Activated B cell treated with CpG ODN at 0.5 μM for 24 hours (primary cell): ENCODE measurements at regions of chr21 and their contacts with region 1.

Region 1: DNA sequence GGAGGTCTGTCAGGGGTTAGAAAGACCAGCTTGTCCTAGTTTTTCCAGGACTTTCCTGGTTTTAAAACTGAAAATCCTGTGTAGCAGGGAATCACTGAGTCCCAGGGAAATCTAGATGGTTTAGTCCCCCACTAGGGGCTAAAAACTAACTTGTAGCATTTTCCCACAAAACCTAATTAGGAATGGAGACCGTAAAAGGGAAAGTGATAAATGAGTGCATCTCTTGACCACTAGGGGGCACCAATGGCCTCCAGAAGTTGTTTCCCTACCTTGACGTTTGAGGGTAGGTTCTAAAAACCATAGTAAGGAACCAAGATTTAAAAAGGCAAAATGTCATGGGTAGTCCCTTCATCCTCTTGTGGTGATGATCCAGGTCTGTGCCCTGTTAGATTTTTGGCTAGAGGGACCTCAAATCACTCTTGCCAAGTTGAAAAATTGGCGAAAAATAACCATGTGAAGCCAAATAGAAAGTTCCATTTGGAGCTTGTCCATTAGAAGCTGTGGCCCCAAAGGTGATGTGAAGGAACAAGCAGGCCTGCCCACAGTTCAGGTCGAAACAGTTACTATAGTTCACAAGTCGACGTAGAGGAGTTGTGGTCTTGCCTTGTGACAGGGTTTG is 24.5 kb downstream of the CLIC6 start:
- DNase-seq: no peak
- ATAC-seq: no peak
- H3K4me3 Mint-ChIP-seq: no peak overlapping the region
- H3K27ac Mint-ChIP-seq: no peak overlapping the region
- H3K4me1 Mint-ChIP-seq: no peaks in the 10 kb centered on the region
- H3K27me3 Mint-ChIP-seq: peaks cover 13% of the 10 kb centered on the region
- CTCF ChIP-seq: peak; percentile 72

Region 2: DNA sequence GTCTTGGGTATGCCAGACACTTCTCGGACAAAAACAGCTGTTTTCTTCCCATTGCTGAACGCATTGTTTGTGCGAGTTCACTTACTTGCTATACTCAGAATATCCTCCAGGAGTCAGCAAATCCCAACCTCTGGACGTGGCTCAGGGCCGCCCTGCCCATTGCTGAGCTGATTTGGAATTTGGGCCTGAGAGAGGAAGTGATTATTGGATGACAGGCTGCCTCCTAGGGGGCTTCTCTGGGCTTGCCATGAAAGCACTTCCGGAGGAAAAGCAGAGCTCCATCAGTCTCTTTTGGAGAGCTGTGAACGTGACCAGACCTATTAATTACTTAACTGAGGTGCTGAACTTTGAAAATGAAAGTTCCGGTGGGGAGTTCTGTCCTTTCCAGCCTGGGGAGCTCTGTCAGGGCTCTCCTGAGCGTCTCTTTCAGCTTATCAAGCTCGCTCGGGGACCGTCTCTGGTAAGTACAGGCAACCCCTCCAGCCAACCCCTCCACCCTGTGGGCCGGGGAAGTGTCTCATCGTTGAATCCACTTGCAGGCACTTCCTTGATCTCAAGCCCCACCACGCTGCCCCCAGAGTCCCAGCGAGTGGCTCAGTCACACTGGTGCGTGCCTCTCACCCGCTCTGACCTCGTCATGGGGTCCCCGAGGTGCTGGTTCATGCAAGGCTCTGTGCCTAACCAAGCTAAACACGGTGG is 52.4 kb after region 1 on chr21:
- CTCF ChIA-PET with region 1: interaction called, 7 read pairs
- POLR2A ChIA-PET with region 1: no interaction called
- intact Hi-C with region 1: loop called (anchors 1 kb)
- DNase-seq: peak; percentile 33
- ATAC-seq: peak; percentile 95
- H3K4me3 Mint-ChIP-seq: peak overlapping the region; percentile 72
- H3K27ac Mint-ChIP-seq: no peak overlapping the region
- H3K4me1 Mint-ChIP-seq: peaks cover 5% of the 10 kb centered on the region
- H3K27me3 Mint-ChIP-seq: peaks cover 16% of the 10 kb centered on the region
- CTCF ChIP-seq: peak; percentile 36

Region 3: DNA sequence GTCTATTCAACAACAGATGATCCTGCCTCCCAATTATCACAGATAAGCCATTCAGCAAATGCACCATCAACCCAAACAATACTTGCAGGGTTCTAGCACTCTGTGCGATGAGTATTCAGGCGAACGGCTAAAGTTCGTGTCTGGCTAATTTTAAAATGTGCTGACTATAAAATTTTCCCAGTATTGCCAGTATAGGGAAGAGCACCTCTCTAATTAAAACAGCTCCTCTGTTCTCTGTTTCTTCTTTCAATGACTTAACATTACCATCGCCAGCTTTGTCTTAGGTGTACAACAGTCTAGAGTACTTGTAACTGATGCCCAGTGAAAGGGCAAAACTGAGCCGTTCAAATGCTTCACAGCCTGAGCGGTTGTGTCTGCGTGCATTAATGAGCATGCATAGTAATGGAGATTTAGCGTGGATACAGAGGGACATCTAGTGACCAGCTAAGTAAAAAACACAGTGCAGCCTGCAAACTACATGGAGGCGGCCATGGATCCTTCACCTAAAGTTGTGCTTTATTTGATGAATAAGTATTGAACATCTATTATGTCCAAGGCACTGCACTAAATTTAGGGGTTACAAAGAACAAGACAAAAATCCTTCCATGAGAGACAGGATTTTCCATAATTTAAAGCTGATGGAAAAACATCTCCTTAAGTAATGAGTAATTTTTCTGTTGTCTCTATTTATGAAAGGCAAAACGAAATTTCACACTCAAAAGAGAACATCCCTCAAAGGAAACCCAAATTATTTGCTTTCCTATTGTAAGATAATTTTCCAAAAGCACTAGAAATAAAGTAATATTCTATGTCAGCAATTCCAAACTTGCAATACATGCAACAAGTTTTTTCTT is 1247.0 kb after region 1 on chr21:
- CTCF ChIA-PET with region 1: interaction called, 4 read pairs
- POLR2A ChIA-PET with region 1: no interaction called
- intact Hi-C with region 1: loop called (anchors 2 kb)
- DNase-seq: no peak
- ATAC-seq: peak; percentile 71
- H3K4me3 Mint-ChIP-seq: no peak overlapping the region
- H3K27ac Mint-ChIP-seq: no peak overlapping the region
- H3K4me1 Mint-ChIP-seq: peaks cover 2% of the 10 kb centered on the region
- H3K27me3 Mint-ChIP-seq: peaks cover 3% of the 10 kb centered on the region
- CTCF ChIP-seq: no peak

Region 4: GRCh38 chr21:36028127-36029069 is 1335.1 kb after region 1 on chr21:
- CTCF ChIA-PET with region 1: interaction called, 27 read pairs
- POLR2A ChIA-PET with region 1: interaction called, 5 read pairs
- intact Hi-C with region 1: loop called (anchors 1 kb)
- DNase-seq: peak; percentile 49
- ATAC-seq: peak; percentile 90
- H3K4me3 Mint-ChIP-seq: no peak overlapping the region
- H3K27ac Mint-ChIP-seq: no peak overlapping the region
- H3K4me1 Mint-ChIP-seq: peaks cover 5% of the 10 kb centered on the region
- H3K27me3 Mint-ChIP-seq: no peaks in the 10 kb centered on the region
- CTCF ChIP-seq: peak; percentile 85

Region 5: GRCh38 chr21:36104317-36105300 is 1411.3 kb after region 1 on chr21:
- CTCF ChIA-PET with region 1: no interaction called
- POLR2A ChIA-PET with region 1: no interaction called
- intact Hi-C with region 1: loop called (anchors 1 kb)
- DNase-seq: peak; percentile 64
- ATAC-seq: peak; percentile 83
- H3K4me3 Mint-ChIP-seq: peak overlapping the region; percentile 39
- H3K27ac Mint-ChIP-seq: peak overlapping the region; percentile 20
- H3K4me1 Mint-ChIP-seq: peaks cover 10% of the 10 kb centered on the region
- H3K27me3 Mint-ChIP-seq: peaks cover 22% of the 10 kb centered on the region
- CTCF ChIP-seq: no peak

Region 6: GRCh38 chr21:36113647-36114428 is 1420.5 kb after region 1 on chr21:
- CTCF ChIA-PET with region 1: no interaction called
- POLR2A ChIA-PET with region 1: no interaction called
- intact Hi-C with region 1: loop called (anchors 1 kb)
- DNase-seq: no peak
- ATAC-seq: no peak
- H3K4me3 Mint-ChIP-seq: peak overlapping the region; percentile 75
- H3K27ac Mint-ChIP-seq: peak overlapping the region; percentile 80
- H3K4me1 Mint-ChIP-seq: peaks cover 30% of the 10 kb centered on the region
- H3K27me3 Mint-ChIP-seq: no peaks in the 10 kb centered on the region
- CTCF ChIP-seq: no peak